ENCODE measurements at regions of chr5 and their contacts with region 1.

Region 1: GRCh38 chr5:169089342-169089741 is 211.6 kb downstream of the SLIT3 start:
- DNase-seq: no peak
- H3K4me3 ChIP-seq: no peak overlapping the region
- H3K27ac ChIP-seq: no peak overlapping the region
- H3K4me1 ChIP-seq: peaks cover 13 to 29% (median 23%) of the 10 kb centered on the region in 4 experiments
- H3K27me3 ChIP-seq: no peaks in the 10 kb centered on the region; a peak in 2 of 7 replicates
- CTCF ChIP-seq: peak; percentile 50 to 60 (median 59)
- EP300 ChIP-seq: no peak
- POLR2A ChIP-seq: no peak
- RAD21 ChIP-seq: peak; percentile 20 to 43; a peak in 1 of 4 replicates

Region 2: DNA sequence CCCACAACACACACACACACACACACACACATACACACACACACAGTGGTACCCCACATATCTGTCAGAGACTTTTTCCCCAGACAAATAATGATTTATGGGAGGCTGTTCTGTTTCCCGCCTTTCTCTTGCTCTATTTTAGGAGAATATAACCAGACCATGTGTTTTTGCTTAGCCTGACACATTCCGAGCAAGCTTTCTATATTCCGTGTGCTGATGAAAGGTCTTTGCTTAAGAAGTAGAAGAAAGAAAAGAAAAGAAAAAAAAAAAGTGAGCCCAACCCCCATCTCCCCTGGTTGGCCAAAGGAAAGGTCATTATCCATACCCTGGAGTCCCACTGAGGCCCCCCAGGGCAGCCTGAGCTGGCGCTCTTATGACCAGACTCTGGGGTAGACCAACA is 127.0 kb before region 1 on chr5:
- CTCF ChIA-PET with region 1: no interaction called
- POLR2A ChIA-PET with region 1: no interaction called
- DNase-seq: no peak
- H3K4me3 ChIP-seq: no peak overlapping the region
- H3K27ac ChIP-seq: no peak overlapping the region
- H3K4me1 ChIP-seq: peaks cover 0 to 3% (median 1%) of the 10 kb centered on the region in 4 experiments; a peak in 1 of 7 replicates
- H3K27me3 ChIP-seq: no peaks in the 10 kb centered on the region; a peak in 1 of 7 replicates
- CTCF ChIP-seq: no peak
- EP300 ChIP-seq: no peak
- POLR2A ChIP-seq: no peak
- RAD21 ChIP-seq: no peak

Region 3: GRCh38 chr5:169065400-169065799 is 23.9 kb before region 1 on chr5:
- CTCF ChIA-PET with region 1: no interaction called
- POLR2A ChIA-PET with region 1: no interaction called
- DNase-seq: no peak
- H3K4me3 ChIP-seq: no peak overlapping the region
- H3K27ac ChIP-seq: no peak overlapping the region
- H3K4me1 ChIP-seq: peaks cover 2 to 18% (median 9%) of the 10 kb centered on the region in 4 experiments; a peak in 6 of 7 replicates
- H3K27me3 ChIP-seq: peaks cover 0 to 2% (median 0%) of the 10 kb centered on the region in 4 experiments; a peak in 2 of 7 replicates
- CTCF ChIP-seq: no peak
- EP300 ChIP-seq: no peak
- POLR2A ChIP-seq: no peak
- RAD21 ChIP-seq: no peak

Region 4: DNA sequence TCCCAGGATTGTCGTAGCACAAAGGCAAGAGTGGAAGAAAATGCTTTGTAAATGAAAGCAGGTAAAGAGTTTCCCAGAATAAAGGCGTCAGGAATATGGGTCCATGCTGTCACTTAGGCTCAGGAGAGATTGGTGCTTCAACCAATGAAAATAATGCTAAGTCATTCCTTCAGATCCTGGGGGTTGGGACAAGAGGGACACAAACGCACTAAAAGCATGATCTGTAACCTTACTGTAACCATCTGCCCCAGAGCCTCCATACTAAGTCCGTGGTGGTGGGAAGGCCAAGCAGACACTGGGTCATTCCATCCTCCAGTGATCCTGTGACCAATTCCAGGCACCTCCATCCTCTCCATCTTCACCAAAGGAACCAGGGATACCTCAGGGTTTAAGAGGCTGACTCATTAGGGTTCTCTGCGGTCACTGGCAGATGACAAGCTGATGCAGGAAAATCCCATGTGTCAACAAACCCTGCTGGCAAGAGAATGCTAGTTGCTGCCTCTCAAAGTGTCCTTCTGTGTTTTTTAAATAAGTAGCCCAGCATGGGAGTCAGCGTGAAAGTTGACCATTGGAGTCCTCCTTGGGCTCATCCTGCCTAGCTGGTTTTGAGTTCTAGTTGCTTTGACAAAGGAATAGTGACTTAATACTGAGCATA is 11.2 kb after region 1 on chr5:
- CTCF ChIA-PET with region 1: interaction called, 19 read pairs
- POLR2A ChIA-PET with region 1: no interaction called
- DNase-seq: no peak
- H3K4me3 ChIP-seq: no peak overlapping the region
- H3K27ac ChIP-seq: no peak overlapping the region
- H3K4me1 ChIP-seq: peaks cover 0 to 13% (median 6%) of the 10 kb centered on the region in 4 experiments; a peak in 3 of 7 replicates
- H3K27me3 ChIP-seq: no peaks in the 10 kb centered on the region; a peak in 1 of 7 replicates
- CTCF ChIP-seq: no peak
- EP300 ChIP-seq: no peak
- POLR2A ChIP-seq: no peak
- RAD21 ChIP-seq: no peak

Region 5: GRCh38 chr5:169149317-169149716 is 60.0 kb after region 1 on chr5:
- CTCF ChIA-PET with region 1: interaction called, 12 read pairs
- POLR2A ChIA-PET with region 1: no interaction called
- DNase-seq: no peak
- H3K4me3 ChIP-seq: no peak overlapping the region
- H3K27ac ChIP-seq: no peak overlapping the region
- H3K4me1 ChIP-seq: peaks cover 0 to 5% (median 3%) of the 10 kb centered on the region in 4 experiments; a peak in 2 of 7 replicates
- H3K27me3 ChIP-seq: no peaks in the 10 kb centered on the region
- CTCF ChIP-seq: peak; percentile 7 to 73 (median 56)
- EP300 ChIP-seq: no peak
- POLR2A ChIP-seq: no peak
- RAD21 ChIP-seq: peak; percentile 56 to 72

Measured in H1 (cell line).